A549 (cell line): ENCODE measurements at regions of chr2 and their contacts with region 1.

Region 1: DNA sequence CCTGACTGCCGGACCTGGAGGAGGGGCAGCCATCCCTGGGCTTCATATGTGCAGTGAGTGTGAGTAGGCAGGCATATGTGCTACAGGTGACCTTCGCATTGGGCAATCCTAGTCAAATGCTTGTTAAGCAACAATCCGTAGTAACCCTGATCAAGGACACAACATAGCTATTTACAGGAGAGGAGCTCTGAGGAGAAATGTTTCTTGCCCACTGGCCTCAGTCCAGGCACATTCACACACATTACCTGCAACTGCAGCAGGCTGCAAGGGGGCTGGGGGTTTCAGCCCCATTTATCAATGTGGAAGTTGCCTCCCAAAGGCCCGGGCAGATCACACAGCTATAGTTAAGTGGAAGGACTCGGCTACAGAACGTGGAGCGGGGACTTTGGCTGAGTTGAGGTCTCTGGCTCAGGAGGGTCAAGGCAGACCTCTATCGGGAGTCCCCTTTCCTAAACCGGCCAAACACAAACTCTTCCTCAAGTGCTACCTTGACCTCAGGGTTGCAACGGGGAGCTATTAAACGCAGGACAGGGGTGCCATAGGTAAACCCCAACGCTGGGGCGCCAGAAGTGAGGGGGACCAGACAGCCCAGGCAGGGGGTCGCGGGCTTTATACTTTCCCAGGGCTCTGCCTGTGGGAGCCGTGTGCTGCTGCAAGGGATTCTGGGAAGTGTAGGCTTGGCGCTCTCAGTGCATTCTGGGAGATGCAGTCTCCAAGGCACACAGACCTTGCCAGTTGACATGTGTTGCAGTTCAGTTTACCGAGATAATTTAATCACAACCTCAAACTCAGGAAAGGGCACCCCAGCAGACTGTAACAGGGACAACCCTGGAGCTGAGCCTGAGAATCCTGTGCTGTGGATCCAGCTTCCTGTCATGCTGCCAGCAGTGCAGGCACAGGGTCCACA is 9.4 kb downstream of the KHK start:
- DNase-seq: peak; percentile 56 to 80
- ATAC-seq: peak; percentile 67 to 85
- H3K4me3 ChIP-seq: no peak overlapping the region
- H3K27ac ChIP-seq: peak overlapping the region; percentile 46 to 71; a peak in 5 of 6 replicates
- H3K4me1 ChIP-seq: peaks cover 20% of the 10 kb centered on the region
- CTCF ChIP-seq: no peak
- EP300 ChIP-seq: no peak
- POLR2A ChIP-seq: no peak
- RAD21 ChIP-seq: no peak

Region 2: DNA sequence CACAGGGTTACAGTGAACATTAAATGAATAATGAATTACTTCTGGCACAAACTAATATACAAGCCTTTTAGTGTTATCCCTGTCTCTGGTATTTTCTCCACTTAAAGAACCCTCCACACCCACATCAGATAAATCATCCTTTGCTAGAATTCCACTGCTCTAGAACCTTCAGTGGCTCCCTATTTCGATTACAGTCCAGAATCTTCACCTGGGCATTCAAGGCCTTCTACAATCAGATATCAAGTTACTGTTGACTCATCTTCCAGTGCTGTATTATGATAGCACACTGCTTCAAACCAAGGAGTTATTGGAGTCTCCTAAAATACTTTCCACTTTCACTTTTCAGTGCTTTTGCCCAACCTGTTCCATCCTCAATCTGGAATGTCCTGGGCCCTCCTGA is 19.5 kb after region 1 on chr2:
- CTCF ChIA-PET with region 1: interaction called, 28 read pairs
- POLR2A ChIA-PET with region 1: no interaction called
- DNase-seq: no peak
- ATAC-seq: no peak
- H3K4me3 ChIP-seq: no peak overlapping the region
- H3K27ac ChIP-seq: no peak overlapping the region
- H3K4me1 ChIP-seq: 0 out of 3 replicates have a peak, but pooled peaks cover 4% of the 10 kb centered on the region
- CTCF ChIP-seq: no peak
- EP300 ChIP-seq: no peak
- POLR2A ChIP-seq: no peak
- RAD21 ChIP-seq: no peak

Region 3: DNA sequence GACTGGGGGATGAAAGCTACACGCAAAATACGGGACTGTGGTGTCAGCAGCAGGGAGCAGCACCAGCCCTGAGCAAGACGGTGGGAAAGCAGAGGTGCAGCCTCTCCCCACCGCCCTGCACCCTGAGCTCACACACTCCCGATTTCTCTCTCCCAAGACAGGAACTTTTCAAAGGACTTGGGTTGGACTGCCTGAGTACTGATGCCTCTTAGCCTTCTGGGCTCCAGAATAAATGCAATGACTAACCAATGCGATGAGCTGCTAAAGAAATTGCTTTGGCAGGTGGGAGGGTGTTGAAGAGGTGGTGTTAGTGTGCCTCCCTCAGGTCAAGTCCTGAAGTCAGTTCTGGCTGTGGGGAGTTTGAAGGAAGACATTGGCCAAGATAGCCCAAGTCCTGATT is 195.9 kb after region 1 on chr2:
- CTCF ChIA-PET with region 1: interaction called, 156 read pairs
- POLR2A ChIA-PET with region 1: no interaction called
- DNase-seq: peak; percentile 36 to 66
- ATAC-seq: peak; percentile 77 to 79
- H3K4me3 ChIP-seq: no peak overlapping the region
- H3K27ac ChIP-seq: peak overlapping the region; percentile 19 to 49; a peak in 4 of 6 replicates
- H3K4me1 ChIP-seq: peaks cover 36% of the 10 kb centered on the region
- CTCF ChIP-seq: peak; percentile 36
- EP300 ChIP-seq: no peak
- POLR2A ChIP-seq: no peak
- RAD21 ChIP-seq: peak; percentile 57 to 68